ENCODE measurements at regions of chr13 and their contacts with region 1.

Region 1: DNA sequence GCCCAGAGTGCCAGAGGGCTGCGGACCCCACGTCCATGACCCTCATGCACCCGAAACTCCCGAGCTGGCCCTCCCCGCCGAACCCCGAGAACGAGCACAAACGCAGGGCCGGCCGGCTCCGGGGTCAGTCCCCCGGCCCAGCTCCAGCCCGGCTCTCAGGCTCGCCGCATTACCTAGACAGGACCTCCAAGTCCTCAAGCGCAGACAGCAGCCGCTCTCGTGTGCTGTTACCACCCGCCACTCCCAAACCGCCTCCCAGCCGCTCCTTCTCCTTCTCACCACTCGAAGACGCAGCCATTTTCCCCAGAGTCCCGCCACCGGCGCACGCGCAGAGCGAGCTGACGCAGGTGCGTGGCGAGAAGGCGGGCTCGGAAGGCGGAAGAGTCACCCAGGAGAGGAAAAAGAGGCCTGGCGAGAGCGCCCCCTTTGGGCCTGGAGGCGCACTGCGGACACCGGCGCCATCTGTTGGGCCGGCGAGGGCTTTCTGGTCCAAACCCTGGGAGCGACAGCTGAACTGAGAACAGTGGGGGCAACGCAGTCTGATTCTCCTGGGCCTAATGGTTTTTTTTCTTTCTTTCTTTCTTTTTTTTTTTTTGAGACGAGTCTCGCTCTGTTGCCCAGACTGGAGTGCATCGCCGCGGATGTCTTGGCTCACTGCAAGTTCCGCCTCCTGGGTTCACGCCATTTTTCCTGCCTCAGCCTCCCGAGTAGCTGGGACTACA is at the start of gene MED4:
- DNase-seq: peak; percentile 96 to 99 (median 97)
- ATAC-seq: peak; percentile 98
- H3K4me3 ChIP-seq: peak within 1 kb of the TSS; percentile 90 to 96
- H3K4me3 Mint-ChIP-seq: peak within 1 kb of the TSS; percentile 96
- H3K27ac ChIP-seq: peak within 1 kb of the TSS; percentile 90 to 92
- H3K27ac Mint-ChIP-seq: peak within 1 kb of the TSS; percentile 97
- H3K4me1 ChIP-seq: peaks cover 21% of the 10 kb centered on the region
- H3K4me1 Mint-ChIP-seq: peaks cover 45% of the 10 kb centered on the region
- H3K27me3 ChIP-seq: no peaks in the 10 kb centered on the region
- H3K27me3 Mint-ChIP-seq: no peaks in the 10 kb centered on the region
- CTCF ChIP-seq: peak; percentile 100
- total RNA-seq, gene MED4: 60.8 to 63.6 TPM

Region 2: DNA sequence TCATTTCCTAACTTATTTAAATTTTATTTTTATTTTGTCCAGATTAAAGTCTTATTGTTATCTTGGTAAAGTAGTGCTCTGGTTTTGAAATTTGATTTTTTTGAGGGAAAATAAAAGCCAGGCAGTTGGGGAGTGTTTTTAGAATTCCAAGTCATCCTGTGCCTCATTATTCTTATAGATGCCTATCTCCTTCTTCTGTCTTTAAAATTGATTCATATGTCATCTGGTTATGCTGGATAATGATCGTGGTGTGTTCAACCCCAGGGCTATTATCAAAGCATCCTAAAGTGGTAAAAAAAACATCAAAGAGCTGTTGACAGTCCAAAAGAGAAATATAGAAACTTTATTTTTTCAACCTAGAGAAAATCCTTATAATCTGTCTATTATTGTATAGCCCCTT is 874.7 kb after region 1 on chr13:
- CTCF ChIA-PET with region 1: no interaction called
- POLR2A ChIA-PET with region 1: no interaction called
- intact Hi-C with region 1: loop called in 1 of 2 experiments (anchors 5 kb)
- DNase-seq: no peak
- ATAC-seq: no peak
- H3K4me3 ChIP-seq: no peak overlapping the region
- H3K4me3 Mint-ChIP-seq: no peak overlapping the region
- H3K27ac ChIP-seq: no peak overlapping the region
- H3K27ac Mint-ChIP-seq: no peak overlapping the region
- H3K4me1 ChIP-seq: peaks cover 3% of the 10 kb centered on the region
- H3K4me1 Mint-ChIP-seq: peaks cover 4% of the 10 kb centered on the region
- H3K27me3 ChIP-seq: no peaks in the 10 kb centered on the region
- H3K27me3 Mint-ChIP-seq: peaks cover 3% of the 10 kb centered on the region
- CTCF ChIP-seq: no peak

Region 3: GRCh38 chr13:48994706-48995105 is 899.8 kb after region 1 on chr13:
- CTCF ChIA-PET with region 1: no interaction called
- POLR2A ChIA-PET with region 1: no interaction called
- intact Hi-C with region 1: no loop called
- DNase-seq: no peak
- ATAC-seq: no peak
- H3K4me3 ChIP-seq: no peak overlapping the region
- H3K4me3 Mint-ChIP-seq: no peak overlapping the region
- H3K27ac ChIP-seq: no peak overlapping the region
- H3K27ac Mint-ChIP-seq: no peak overlapping the region
- H3K4me1 ChIP-seq: no peaks in the 10 kb centered on the region
- H3K4me1 Mint-ChIP-seq: peaks cover 33% of the 10 kb centered on the region
- H3K27me3 ChIP-seq: no peaks in the 10 kb centered on the region
- H3K27me3 Mint-ChIP-seq: no peaks in the 10 kb centered on the region
- CTCF ChIP-seq: no peak

Region 4: DNA sequence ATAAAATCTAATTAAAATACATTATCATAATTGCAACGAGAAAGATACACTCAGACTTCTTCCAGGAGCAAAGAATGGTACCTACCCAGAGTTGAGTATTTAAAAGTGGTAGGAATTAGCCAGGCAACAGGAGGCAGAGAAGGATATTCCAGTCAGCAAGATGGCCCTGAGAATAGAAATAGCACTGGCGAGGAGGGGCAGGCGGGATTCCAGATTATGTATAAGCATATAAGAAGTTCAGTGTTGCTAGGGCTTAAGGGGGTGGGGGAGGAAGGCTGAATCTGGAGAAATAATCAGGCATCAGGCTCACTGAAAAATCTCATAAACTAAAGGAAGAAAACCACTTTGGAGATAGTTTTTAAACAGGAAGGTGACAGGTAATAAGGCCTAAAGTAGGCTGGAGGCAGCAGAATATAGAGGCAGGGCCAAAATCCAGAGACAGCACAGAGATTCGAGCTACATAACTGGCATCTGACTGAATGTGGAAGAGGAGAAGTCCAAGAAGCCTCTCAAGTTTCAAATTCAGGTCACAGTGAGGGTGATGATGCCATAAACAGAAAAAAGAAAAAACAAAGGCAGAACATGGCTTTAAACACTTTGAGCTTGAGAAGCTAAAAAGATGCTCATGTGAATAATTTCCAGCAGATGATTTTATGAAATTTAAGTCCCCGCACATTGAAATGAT is 1690.1 kb after region 1 on chr13:
- CTCF ChIA-PET with region 1: no interaction called
- POLR2A ChIA-PET with region 1: no interaction called
- intact Hi-C with region 1: loop called in 1 of 2 experiments (anchors 10 kb)
- DNase-seq: no peak
- ATAC-seq: no peak
- H3K4me3 ChIP-seq: no peak overlapping the region
- H3K4me3 Mint-ChIP-seq: no peak overlapping the region
- H3K27ac ChIP-seq: no peak overlapping the region
- H3K27ac Mint-ChIP-seq: no peak overlapping the region
- H3K4me1 ChIP-seq: peaks cover 11% of the 10 kb centered on the region
- H3K4me1 Mint-ChIP-seq: peaks cover 64% of the 10 kb centered on the region
- H3K27me3 ChIP-seq: no peaks in the 10 kb centered on the region
- H3K27me3 Mint-ChIP-seq: no peaks in the 10 kb centered on the region
- CTCF ChIP-seq: no peak